Right cardiac atrium (tissue), 5 donors: ENCODE measurements at regions of chr18 and their contacts with region 1.

Region 1: GRCh38 chr18:54983041-54983686 is 23.9 kb upstream of the CCDC68 start:
- DNase-seq: no peak
- ATAC-seq: peak; percentile 64 to 70
- H3K4me3 ChIP-seq: no peak overlapping the region
- H3K27ac ChIP-seq: no peak overlapping the region
- H3K4me1 ChIP-seq: no peaks in the 10 kb centered on the region
- H3K27me3 ChIP-seq: no peaks in the 10 kb centered on the region

Region 2: GRCh38 chr18:54444319-54444914 is 538.7 kb before region 1 on chr18:
- intact Hi-C with region 1: loop called in 2 of 4 experiments (anchors 10 kb)
- DNase-seq: peak; percentile 23 to 63 (median 56)
- ATAC-seq: peak; percentile 53 to 68
- H3K4me3 ChIP-seq: no peak overlapping the region
- H3K27ac ChIP-seq: no peak overlapping the region
- H3K4me1 ChIP-seq: no peaks in the 10 kb centered on the region
- H3K27me3 ChIP-seq: no peaks in the 10 kb centered on the region

Region 3: GRCh38 chr18:54843314-54843713 is 139.8 kb before region 1 on chr18:
- intact Hi-C with region 1: no loop called
- DNase-seq: no peak
- ATAC-seq: no peak
- H3K4me3 ChIP-seq: no peak overlapping the region
- H3K27ac ChIP-seq: no peak overlapping the region
- H3K4me1 ChIP-seq: no peaks in the 10 kb centered on the region
- H3K27me3 ChIP-seq: no peaks in the 10 kb centered on the region

Region 4: GRCh38 chr18:55110436-55110835 is 127.3 kb after region 1 on chr18:
- intact Hi-C with region 1: no loop called
- DNase-seq: peak in 1 of 3 donors; percentile 20
- ATAC-seq: peak; percentile 70 to 95
- H3K4me3 ChIP-seq: no peak overlapping the region
- H3K27ac ChIP-seq: no peak overlapping the region
- H3K4me1 ChIP-seq: no peaks in the 10 kb centered on the region
- H3K27me3 ChIP-seq: no peaks in the 10 kb centered on the region